HCT116 (cell line): ENCODE measurements at regions of chr22 and their contacts with region 1.

Region 1: DNA sequence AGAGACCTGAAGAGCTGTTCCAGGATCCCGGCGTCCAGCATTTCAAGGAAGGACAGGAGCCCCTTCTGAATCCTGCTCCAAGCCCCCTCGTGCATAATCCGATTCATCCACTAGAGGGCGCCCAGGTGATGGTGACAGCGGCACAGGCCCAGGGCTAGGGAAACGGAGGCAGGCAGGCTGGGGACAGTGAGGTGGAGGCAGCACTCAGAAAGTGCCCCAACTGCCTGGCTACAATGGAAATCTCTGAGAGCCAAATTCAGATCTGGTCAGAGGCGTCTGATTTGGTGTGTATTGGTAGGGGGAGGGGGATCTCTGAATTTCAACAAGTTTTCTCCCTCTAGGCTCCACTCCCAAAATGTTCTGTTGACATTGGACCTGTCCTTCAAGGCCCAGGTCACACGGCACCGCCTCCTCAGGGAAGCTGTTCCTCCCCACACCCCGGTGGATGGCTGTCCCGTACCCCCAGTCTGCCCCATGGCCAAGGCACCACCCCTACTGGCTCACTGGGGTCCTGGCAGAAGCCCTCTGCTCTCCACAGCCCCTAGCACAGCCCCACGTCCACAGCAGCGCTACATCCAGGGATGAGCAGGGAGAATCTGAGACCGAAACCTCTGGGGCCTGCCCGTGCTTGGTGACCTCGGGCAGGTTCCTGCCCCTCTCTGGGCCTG is 142.9 kb downstream of the CRYBB2 start:
- DNase-seq: peak; percentile 21
- ATAC-seq: peak; percentile 94
- H3K4me3 ChIP-seq: no peak overlapping the region
- H3K27ac ChIP-seq: no peak overlapping the region
- H3K4me1 ChIP-seq: no peaks in the 10 kb centered on the region
- H3K27me3 ChIP-seq: no peaks in the 10 kb centered on the region
- CTCF ChIP-seq: peak; percentile 71 to 96 (median 94); a peak in 5 of 6 replicates
- POLR2A ChIP-seq: no peak
- RAD21 ChIP-seq: peak; percentile 75

Region 2: DNA sequence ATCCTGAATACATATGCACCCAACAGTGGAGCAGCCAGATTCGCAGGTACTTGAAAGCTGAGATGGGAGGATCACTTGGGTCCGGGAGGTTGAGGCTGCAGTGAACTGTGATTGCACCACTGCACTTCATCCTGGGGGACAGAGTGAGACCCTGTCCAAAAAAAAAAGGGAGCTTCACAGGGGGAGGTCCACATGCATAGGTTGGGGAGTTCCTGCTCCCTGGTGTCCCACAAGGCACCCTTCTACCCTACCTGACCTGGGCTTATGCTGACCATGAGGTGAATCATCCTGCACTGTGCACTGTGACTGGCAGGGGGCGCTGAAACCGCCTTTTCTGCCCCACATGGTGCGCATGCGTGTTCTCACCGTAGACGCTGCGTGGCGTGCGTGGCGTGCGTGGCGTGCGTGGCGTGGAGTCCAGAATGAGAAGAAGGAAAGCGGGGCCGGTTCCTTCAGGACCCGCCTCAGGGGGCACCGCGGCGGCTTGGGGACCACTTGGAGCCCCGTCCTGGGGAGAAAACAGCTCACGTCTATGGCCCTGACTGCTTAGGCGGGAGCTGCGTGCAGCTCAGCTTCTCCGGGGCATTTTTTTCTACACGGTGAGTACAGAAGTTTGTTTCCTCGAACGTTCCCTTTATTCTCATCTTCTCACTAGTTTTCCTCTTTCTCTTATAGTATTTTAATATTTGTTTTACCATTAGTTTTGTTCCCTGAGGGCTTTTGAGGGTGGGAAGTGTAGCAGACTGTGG is 85.5 kb after region 1 on chr22:
- CTCF ChIA-PET with region 1: no interaction called
- POLR2A ChIA-PET with region 1: no interaction called
- RAD21 ChIA-PET with region 1: no interaction called
- intact Hi-C with region 1: loop called (anchors 2 kb)
- DNase-seq: peak; percentile 71
- ATAC-seq: peak; percentile 96
- H3K4me3 ChIP-seq: peak overlapping the region; percentile 82 to 94
- H3K27ac ChIP-seq: peak overlapping the region; percentile 65
- H3K4me1 ChIP-seq: peaks cover 8 to 12% of the 10 kb centered on the region in 2 experiments; a peak in 3 of 4 replicates
- H3K27me3 ChIP-seq: no peaks in the 10 kb centered on the region
- CTCF ChIP-seq: peak; percentile 52 to 94 (median 85); a peak in 5 of 6 replicates
- POLR2A ChIP-seq: peak; percentile 78
- RAD21 ChIP-seq: peak; percentile 35; the same call in 1 of the 2 replicates

Region 3: GRCh38 chr22:25702040-25702439 is 339.7 kb after region 1 on chr22:
- CTCF ChIA-PET with region 1: no interaction called
- POLR2A ChIA-PET with region 1: no interaction called
- RAD21 ChIA-PET with region 1: no interaction called
- intact Hi-C with region 1: loop called (anchors 5 kb)
- DNase-seq: no peak
- ATAC-seq: no peak
- H3K4me3 ChIP-seq: no peak overlapping the region
- H3K27ac ChIP-seq: no peak overlapping the region
- H3K4me1 ChIP-seq: no peaks in the 10 kb centered on the region
- H3K27me3 ChIP-seq: no peaks in the 10 kb centered on the region
- CTCF ChIP-seq: peak; percentile 11 to 55 (median 40); a peak in 4 of 6 replicates
- POLR2A ChIP-seq: no peak
- RAD21 ChIP-seq: peak; percentile 59